ENCODE measurements at regions of chr9 and their contacts with region 1.

Region 1: DNA sequence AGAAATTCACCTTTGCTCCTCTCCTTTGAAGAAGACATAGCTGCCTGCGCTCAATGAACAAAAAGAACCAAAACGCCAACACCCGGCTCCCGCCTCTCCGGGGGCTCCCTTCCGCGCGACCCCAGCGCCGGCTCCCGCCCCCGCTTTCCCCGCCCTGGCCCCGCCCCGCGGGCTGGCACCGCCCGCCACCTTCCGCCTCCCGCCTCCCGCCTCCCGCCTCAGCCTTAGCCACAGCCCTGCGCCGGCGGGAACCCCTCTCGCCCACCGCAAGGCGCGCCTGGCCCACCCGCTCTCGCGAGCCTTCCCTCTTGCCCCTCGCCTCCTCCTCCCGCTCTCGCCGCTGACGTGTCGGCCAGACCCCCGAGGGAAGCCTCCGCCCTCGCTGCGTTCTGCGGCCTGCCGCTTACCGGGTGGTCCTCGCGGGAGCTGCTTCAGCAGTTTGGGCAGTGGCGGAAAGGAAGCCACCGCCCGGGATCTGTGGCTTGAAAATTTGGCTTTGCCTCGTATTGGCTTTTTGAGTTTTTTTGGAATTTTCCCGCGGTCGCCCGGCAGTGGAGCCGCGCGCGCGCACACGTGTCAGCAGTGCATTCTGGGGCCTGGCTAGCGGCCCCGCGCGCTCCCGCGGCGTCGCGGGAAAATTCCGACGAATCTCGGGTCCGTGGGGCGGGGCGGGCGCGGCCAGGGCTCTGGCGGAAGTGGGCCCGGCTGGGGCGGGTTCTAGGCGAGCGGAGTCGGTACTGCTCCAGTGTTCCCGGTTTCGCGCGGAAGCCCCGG is at the start of gene FANCC:
- DNase-seq: peak; percentile 74 to 89 (median 81)
- ATAC-seq: peak; percentile 94
- H3K4me3 ChIP-seq: peak within 1 kb of the TSS; percentile 85
- H3K4me3 Mint-ChIP-seq: peak within 1 kb of the TSS; percentile 78 to 95 (median 92)
- H3K27ac ChIP-seq: peak within 1 kb of the TSS; percentile 91
- H3K27ac Mint-ChIP-seq: peak within 1 kb of the TSS; percentile 75 to 95 (median 89)
- H3K4me1 ChIP-seq: peaks cover 3 to 7% of the 10 kb centered on the region in 2 donors
- H3K4me1 Mint-ChIP-seq: peaks cover 8 to 33% (median 23%) of the 10 kb centered on the region in 7 donors
- H3K27me3 ChIP-seq: no peaks in the 10 kb centered on the region
- H3K27me3 Mint-ChIP-seq: peaks cover 0 to 26% (median 0%) of the 10 kb centered on the region in 5 donors
- total RNA-seq, gene FANCC: 5.7 to 14.6 (median 7.9) TPM

Region 2: GRCh38 chr9:94259077-94259892 is 1058.0 kb before region 1 on chr9 and contains the start of gene ZNF169:
- CTCF ChIA-PET with region 1: no interaction called
- POLR2A ChIA-PET with region 1: no interaction called
- intact Hi-C with region 1: loop called in 1 of 2 experiments (anchors 5 kb)
- DNase-seq: peak; percentile 68 to 84 (median 77)
- ATAC-seq: peak; percentile 100
- H3K4me3 ChIP-seq: peak within 1 kb of the TSS; percentile 99
- H3K4me3 Mint-ChIP-seq: peak within 1 kb of the TSS; percentile 97 to 99 (median 99)
- H3K27ac ChIP-seq: peak within 1 kb of the TSS; percentile 66
- H3K27ac Mint-ChIP-seq: peak within 1 kb of the TSS; percentile 93 to 97 (median 95)
- H3K4me1 ChIP-seq: peaks cover 7% of the 10 kb centered on the region in 2 donors
- H3K4me1 Mint-ChIP-seq: peaks cover 28 to 56% (median 43%) of the 10 kb centered on the region in 7 donors
- H3K27me3 ChIP-seq: no peaks in the 10 kb centered on the region
- H3K27me3 Mint-ChIP-seq: peaks cover 4 to 15% (median 6%) of the 10 kb centered on the region in 5 donors
- total RNA-seq, gene ZNF169: 5.0 to 28.4 (median 12.9) TPM

Region 3: DNA sequence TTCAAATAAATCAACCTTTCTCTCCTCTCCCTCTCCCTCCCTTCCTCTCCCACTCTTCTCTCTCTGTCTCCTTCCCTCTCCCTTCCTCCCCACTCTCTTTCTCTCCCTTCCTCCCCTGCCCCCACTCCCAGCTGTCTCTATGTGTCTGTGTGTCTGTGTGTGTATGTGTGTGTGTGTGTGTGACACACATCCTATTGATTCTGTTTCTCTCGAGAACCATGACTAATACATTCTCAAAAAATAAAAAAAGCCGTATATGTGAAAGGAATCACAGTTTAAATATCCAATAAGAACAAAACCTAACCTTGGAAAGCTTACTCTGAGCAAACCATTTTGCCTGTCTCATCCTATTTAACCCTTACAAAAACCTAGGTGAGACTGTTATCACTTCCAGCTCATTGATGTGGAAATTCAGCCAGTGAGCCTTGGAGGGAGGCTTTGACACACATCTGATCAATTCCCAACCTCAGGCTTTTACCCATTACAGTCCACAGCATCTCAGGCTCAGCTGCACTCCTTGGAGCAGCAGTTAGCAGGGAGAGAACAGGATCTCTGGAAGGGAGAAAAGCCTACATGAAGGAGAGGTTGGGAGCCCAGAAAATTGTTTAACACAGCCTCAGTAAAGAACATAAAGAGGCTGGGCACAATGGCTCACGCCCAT is 976.3 kb after region 1 on chr9:
- CTCF ChIA-PET with region 1: no interaction called
- POLR2A ChIA-PET with region 1: no interaction called
- intact Hi-C with region 1: no loop called
- DNase-seq: no peak
- ATAC-seq: no peak
- H3K4me3 ChIP-seq: no peak overlapping the region
- H3K4me3 Mint-ChIP-seq: no peak overlapping the region
- H3K27ac ChIP-seq: no peak overlapping the region
- H3K27ac Mint-ChIP-seq: peak overlapping the region in 1 of 9 donors; percentile 65
- H3K4me1 ChIP-seq: no peaks in the 10 kb centered on the region
- H3K4me1 Mint-ChIP-seq: no peaks in the 10 kb centered on the region
- H3K27me3 ChIP-seq: no peaks in the 10 kb centered on the region
- H3K27me3 Mint-ChIP-seq: peaks cover 0 to 4% (median 0%) of the 10 kb centered on the region in 5 donors